ENCODE measurements at regions of chr17 and their contacts with region 1.

Region 1: GRCh38 chr17:8409966-8410864 is 12.6 kb upstream of the RNF222 start:
- DNase-seq: peak; percentile 73
- ATAC-seq: peak; percentile 76
- H3K4me3 ChIP-seq: no peak overlapping the region
- H3K27ac ChIP-seq: 0 out of 2 replicates have a peak overlapping the region, but pooled peaks have one; percentile 19
- H3K4me1 ChIP-seq: peaks cover 9 to 41% of the 10 kb centered on the region in 2 experiments
- H3K27me3 ChIP-seq: no peaks in the 10 kb centered on the region
- CTCF ChIP-seq: peak; percentile 62 to 88 (median 85); a peak in 5 of 6 replicates
- POLR2A ChIP-seq: no peak
- RAD21 ChIP-seq: peak; percentile 79

Region 2: DNA sequence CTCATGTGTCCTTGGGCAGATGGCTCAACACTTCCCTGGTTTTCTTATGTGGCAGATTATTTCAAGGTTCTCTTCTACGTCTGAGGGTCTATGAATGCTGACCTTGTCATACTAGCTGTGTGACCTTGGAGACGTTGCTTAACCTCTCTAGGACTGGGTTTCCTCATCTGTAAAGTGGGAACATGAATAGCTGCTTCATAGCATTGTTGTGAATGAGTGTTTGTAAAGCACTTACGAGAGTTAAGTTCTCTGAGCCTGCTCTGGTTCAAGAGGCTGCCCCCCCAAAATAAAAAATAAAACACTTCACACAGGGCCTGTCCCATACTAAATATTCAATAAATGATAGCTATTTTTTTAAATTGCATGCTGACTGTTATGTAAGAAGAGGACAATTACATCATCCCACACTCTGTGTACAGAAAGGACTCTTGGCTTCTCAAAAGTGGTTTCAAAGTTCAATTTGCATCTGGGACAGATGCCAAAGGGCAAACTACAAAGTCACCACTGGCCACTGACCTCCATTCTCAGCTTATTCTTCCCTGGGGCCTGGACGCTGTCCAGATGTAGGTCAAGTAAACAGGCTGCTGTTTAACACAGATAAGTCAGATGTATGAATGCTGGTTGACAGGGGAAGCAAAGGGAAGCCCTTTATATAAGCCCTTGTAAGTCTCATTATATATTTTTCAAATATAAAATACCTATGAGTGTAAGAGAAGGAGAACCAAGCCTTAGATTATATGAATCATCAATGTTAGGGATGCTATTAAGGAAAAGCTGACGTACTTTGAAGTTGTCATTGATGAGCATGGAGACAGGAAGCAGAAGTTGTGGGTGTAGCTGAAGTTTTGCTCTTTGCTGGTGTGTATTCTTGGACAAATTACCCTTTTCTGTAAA is 10.1 kb after region 1 on chr17:
- CTCF ChIA-PET with region 1: interaction called, 17 read pairs
- POLR2A ChIA-PET with region 1: no interaction called
- RAD21 ChIA-PET with region 1: no interaction called
- intact Hi-C with region 1: no loop called
- DNase-seq: no peak
- ATAC-seq: no peak
- H3K4me3 ChIP-seq: no peak overlapping the region
- H3K27ac ChIP-seq: no peak overlapping the region
- H3K4me1 ChIP-seq: peaks cover 6 to 10% of the 10 kb centered on the region in 2 experiments
- H3K27me3 ChIP-seq: peaks cover 6% of the 10 kb centered on the region; the same call in 1 of the 2 replicates
- CTCF ChIP-seq: no peak
- POLR2A ChIP-seq: no peak
- RAD21 ChIP-seq: no peak

Region 3: DNA sequence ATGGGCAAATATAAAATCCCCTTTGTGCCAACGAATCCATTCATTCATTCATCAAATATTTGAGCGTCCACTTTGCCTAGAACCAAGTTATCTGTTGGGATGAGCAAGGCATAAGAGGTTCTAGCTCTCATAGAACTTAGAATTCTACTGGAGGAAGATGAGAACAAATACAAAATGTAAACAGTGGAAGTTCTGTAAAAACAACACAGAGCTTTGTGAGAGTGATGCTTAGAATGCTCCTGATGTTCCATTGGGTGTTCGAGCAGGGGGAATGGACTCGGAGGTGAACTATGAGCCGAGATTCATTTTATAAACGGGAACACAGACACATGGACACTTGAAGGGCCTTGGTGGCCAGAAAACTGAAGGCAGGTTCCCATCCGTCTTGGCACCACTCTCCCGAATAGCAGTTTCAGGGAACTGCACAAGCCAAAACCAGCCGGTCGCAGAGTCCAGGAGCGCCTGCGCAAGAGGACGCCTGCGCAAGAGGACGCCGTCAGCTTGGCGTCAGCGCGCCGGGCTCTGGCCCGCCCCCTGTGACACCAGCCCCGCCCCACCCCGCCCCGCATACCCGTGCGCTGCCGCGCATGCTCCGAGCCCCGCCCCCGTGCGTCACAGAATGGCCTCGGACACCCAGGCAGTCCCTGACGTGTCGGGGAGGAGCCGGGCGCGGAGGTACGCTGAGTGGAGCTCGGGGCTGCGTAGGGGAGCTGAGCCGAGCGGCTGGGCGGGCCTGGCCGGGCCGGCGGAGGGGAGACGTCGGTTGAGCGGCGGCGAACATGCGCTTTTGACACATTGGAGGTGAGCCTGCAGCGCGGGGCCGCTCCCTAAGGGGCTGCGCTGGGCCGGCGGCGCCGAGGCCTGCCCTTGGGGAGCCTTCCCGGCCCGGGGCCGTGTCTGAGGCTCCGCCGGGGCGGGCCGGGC is 25.3 kb after region 1 on chr17 and contains the start of gene NDEL1:
- CTCF ChIA-PET with region 1: interaction called, 16 read pairs
- POLR2A ChIA-PET with region 1: interaction called, 14 read pairs
- RAD21 ChIA-PET with region 1: interaction called in 1 of 2 experiments, 3 read pairs
- intact Hi-C with region 1: no loop called
- DNase-seq: peak; percentile 92
- ATAC-seq: peak; percentile 98
- H3K4me3 ChIP-seq: peak within 1 kb of the TSS; percentile 71 to 94
- H3K27ac ChIP-seq: peak within 1 kb of the TSS; percentile 94
- H3K4me1 ChIP-seq: peaks cover 6 to 20% of the 10 kb centered on the region in 2 experiments
- H3K27me3 ChIP-seq: no peaks in the 10 kb centered on the region
- CTCF ChIP-seq: no peak
- POLR2A ChIP-seq: peak; percentile 96
- RAD21 ChIP-seq: 0 out of 2 replicates have a peak, but pooled peaks have one; percentile 3
- total RNA-seq, gene NDEL1: 39.2 TPM

Region 4: DNA sequence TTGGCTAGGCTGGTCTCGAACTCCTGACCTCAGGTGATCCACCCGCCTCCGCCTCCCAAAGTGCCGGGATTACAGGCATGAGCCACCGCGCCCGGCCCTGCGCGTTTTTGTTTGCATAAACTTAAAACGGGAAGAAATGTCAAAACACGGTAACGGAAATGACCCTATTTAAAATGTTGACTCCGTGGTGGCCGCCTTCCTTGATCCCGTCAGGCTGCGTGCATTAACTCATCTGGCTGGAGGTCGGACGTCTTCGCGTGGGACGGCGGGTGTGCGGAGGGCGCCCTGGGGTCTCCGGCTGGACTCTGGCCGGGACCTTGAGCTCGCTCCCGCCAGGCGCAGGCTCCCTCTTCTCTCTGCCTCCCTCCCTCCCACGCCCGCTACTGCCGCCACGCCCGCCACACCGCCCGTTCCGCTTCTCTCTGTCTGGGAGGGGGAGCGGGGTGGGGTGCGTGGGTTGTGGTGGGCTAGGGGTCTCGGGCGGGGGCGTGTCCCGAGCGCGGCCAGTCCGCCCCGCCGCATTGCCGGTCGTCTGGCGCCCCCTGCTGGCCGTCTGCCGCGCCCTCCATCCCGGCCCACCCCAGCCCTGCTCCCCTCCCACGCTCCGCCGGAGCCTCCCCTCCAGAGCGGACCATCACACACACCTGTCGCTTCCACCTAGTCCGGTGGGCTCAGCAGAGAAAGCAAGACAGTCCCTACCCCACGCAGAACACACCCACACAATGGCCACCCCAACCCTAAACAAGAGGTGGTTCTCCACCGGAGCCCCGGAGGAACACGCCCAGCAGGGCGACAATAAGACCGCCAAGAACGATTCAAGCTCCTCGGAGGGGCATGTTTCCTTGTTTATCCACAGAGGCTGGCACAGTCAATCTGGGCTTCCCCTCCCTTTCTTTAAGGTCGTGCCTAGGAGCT is 335.6 kb after region 1 on chr17:
- CTCF ChIA-PET with region 1: interaction called, 27 read pairs
- POLR2A ChIA-PET with region 1: no interaction called
- RAD21 ChIA-PET with region 1: interaction called, 5 to 6 read pairs
- intact Hi-C with region 1: loop called (anchors 2 kb)
- DNase-seq: peak; percentile 16
- ATAC-seq: peak; percentile 97
- H3K4me3 ChIP-seq: peak overlapping the region; percentile 52 to 58
- H3K27ac ChIP-seq: no peak overlapping the region
- H3K4me1 ChIP-seq: peaks cover 0 to 12% of the 10 kb centered on the region in 2 experiments; a peak in 2 of 4 replicates
- H3K27me3 ChIP-seq: no peaks in the 10 kb centered on the region
- CTCF ChIP-seq: peak; percentile 47 to 78 (median 76); a peak in 5 of 6 replicates
- POLR2A ChIP-seq: no peak
- RAD21 ChIP-seq: peak; percentile 89

Measured in HCT116 (cell line).